Ovary (tissue), 10 donors: ENCODE measurements at regions of chr1 and their contacts with region 1.

Region 1: DNA sequence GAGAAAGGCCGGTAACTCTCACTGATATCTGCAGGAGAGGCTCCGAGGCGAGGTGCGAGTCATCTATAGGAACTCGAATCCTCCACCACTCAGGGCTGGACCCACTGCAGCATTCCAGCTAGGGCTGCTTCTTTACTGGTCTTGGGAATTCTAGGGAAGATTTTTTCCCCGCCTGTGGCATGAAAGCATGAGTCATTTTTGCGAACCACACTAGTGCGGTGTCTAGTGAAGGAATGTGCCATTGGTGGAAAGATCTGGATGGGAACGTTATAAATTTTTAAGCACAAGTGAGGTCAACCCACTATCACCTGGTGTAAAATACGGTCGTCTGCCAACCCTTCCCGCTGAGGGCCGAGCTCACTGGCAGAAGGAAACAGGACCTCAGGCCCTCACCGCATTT is 49.7 kb downstream of the SYF2 start:
- DNase-seq: no peak
- H3K4me3 ChIP-seq: no peak overlapping the region
- H3K27ac ChIP-seq: no peak overlapping the region
- H3K4me1 ChIP-seq: no peaks in the 10 kb centered on the region
- H3K27me3 ChIP-seq: no peaks in the 10 kb centered on the region
- CTCF ChIP-seq: no peak
- EP300 ChIP-seq: no peak
- POLR2A ChIP-seq: no peak

Region 2: DNA sequence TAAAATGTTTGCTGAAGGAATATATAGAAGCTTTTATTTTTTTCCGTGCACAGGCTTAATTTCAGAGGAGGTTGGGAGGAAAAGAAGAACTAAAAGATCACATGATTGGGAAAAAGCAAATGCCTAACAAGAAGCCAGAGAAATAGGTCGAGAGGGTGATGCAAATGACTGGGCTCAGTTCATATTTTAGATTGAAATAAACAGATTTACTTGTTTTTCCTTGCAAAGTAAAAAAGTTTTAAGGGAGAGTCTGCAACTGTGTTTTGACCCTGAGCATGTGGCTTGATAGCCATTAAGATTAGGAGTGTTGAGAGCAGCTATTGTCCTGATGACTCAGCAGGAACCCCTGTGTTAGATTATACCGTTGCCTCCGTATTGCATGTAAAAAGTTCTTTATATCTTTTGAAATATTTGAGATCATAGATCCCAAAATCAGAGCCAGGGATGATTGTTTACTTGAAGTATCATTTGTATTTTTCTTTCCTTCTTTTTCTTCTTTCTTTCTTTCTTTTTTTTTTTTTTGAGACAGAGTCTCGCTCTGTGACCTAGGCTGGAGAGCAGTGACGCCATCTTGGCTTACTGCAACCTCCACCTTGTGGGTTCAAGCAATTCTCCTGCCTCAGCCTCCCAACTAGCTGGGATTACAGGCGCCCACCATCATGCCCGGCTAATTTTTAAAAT is 417.2 kb before region 1 on chr1:
- intact Hi-C with region 1: no loop called
- DNase-seq: no peak
- H3K4me3 ChIP-seq: no peak overlapping the region
- H3K27ac ChIP-seq: no peak overlapping the region
- H3K4me1 ChIP-seq: peaks cover 1% of the 10 kb centered on the region
- H3K27me3 ChIP-seq: no peaks in the 10 kb centered on the region
- CTCF ChIP-seq: no peak
- EP300 ChIP-seq: no peak
- POLR2A ChIP-seq: no peak

Region 3: GRCh38 chr1:25150985-25151495 is 31.6 kb before region 1 on chr1:
- intact Hi-C with region 1: loop called in 1 of 4 experiments (anchors 2 kb)
- DNase-seq: no peak
- H3K4me3 ChIP-seq: no peak overlapping the region
- H3K27ac ChIP-seq: no peak overlapping the region
- H3K4me1 ChIP-seq: no peaks in the 10 kb centered on the region
- H3K27me3 ChIP-seq: no peaks in the 10 kb centered on the region
- CTCF ChIP-seq: no peak
- EP300 ChIP-seq: no peak
- POLR2A ChIP-seq: no peak

Region 4: DNA sequence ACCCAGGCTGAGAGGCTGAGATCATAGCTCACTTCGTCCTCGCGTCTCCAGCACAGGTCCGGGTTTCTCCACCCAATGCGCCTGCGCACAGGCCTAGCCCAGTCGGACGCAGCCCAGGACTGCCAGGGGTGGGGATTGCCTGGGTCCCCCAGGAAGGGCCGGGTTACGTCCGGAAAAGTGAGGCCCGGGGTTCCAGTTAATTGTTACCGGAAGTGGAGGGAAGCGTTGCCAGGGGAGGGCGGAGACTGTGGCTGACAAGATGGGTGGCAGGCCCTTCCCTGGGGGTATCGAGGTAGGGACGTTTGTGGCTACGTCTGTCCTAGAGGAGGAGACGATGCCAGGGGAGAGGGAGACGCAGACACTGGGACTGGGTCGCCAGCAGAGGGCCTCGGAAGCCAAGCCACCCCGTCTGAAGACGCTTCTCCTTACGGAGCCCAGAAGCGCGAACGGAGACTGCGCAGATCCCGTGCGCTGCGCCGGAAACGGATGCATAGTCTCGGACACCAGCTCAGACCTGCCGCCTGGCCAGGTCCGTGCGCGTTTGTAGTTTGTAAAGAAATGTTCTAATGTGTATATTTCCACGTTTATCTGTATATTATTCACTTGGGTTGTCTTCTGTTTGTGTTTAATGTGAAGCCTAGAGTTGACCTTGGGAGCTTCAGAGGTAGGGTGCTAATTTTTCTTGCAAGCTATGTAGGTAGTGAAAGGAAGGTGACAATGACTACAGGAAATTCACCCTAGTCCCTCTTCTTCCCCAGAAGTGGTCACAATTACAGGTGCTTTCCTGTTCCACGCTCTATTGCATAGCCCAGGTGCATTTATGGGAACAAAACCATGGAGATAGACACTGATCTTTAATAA is 57.3 kb after region 1 on chr1:
- intact Hi-C with region 1: no loop called
- DNase-seq: peak; percentile 88 to 92 (median 91)
- H3K4me3 ChIP-seq: peak overlapping the region; percentile 41
- H3K27ac ChIP-seq: peak overlapping the region; percentile 91 to 93
- H3K4me1 ChIP-seq: no peaks in the 10 kb centered on the region
- H3K27me3 ChIP-seq: no peaks in the 10 kb centered on the region
- CTCF ChIP-seq: peak; percentile 49 to 86 (median 79)
- EP300 ChIP-seq: no peak
- POLR2A ChIP-seq: no peak